ENCODE measurements at regions of chr1 and their contacts with region 1.

Region 1: DNA sequence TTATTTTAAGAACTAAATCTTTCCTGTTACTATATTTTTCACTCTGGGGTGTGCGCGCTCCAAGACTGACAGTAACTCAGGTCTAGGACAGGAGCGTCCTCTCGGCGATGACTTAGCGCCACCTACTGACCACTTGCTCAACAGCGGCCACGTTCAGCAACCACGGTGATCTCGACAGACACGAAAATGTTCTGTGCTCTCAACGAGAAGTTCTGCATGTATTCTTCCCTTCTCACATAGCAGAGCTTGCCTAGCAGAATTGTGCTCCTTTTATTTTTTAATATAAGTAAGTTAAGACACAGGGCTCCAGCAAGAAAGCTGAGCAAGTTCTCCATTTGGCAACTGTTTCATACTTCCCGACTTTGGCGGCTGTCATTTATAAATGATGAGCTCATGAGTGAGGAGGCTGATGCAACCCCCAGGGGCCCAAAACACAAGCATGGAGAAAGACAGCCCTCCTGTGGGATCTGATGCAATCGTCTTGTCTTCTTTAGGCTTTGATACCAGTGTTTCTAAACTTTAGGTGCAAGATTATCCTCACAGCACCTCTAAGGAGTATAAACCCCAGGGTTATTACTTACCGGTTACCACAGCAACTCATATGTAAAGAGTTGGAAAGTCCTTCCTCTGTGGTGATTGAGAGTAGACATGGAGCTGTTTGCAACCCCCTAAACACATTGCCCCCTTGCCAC is 92.6 kb downstream of the HHIPL2 start:
- H3K4me3 ChIP-seq: peak overlapping the region; percentile 25
- H3K27ac ChIP-seq: no peak overlapping the region; the same call in 1 of the 2 replicates
- H3K4me1 ChIP-seq: no peaks in the 10 kb centered on the region
- CTCF ChIP-seq: peak; percentile 94

Region 2: DNA sequence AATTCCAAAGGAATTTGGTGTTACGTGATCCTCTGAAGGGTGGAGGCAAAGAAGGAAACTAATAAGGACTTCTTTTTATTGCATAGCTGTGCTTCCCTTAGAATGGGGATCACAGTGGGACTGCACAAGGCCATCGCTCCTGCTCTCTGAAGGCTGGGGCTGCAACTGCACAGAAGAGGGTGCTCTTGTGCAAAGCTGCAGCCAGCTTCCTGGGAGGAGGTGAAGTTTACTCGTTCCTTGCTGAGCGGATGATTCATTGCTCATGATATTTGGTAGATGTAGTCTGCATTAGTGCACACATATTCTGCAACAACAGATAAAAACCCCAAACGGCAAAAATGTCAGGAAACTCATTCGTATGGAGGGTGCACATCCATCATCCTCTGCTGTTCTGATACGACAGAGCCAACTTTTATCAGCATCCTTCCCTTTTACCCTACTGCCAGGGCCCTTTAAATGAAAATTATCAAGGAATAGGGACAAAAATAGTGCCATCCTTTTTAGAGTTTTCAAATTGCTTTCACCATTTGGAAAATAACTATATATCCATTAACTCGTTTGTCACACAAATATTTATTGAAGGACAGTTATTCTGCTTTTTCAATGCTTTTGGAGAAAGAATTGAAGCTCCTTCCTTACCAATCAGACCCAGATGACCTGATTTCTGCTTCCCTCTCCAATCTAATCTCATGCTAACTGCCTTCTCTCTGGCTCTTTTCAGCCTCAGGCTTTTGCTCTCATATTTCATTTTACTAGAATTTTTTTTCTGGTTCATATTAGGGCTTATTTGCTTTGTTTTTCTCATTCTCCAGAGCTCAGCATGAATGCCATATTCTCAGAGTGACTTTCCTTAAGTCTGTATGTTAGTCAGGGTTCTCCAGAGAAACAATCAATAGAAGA is 977.0 kb before region 1 on chr1:
- CTCF ChIA-PET with region 1: interaction called, 29 read pairs
- POLR2A ChIA-PET with region 1: no interaction called
- H3K4me3 ChIP-seq: no peak overlapping the region
- H3K27ac ChIP-seq: no peak overlapping the region
- H3K4me1 ChIP-seq: peaks cover 2% of the 10 kb centered on the region; the same call in 1 of the 2 replicates
- CTCF ChIP-seq: peak; percentile 75

Region 3: GRCh38 chr1:222095606-222096475 is 359.5 kb before region 1 on chr1:
- CTCF ChIA-PET with region 1: interaction called, 17 read pairs
- POLR2A ChIA-PET with region 1: no interaction called
- H3K4me3 ChIP-seq: no peak overlapping the region
- H3K27ac ChIP-seq: no peak overlapping the region
- H3K4me1 ChIP-seq: no peaks in the 10 kb centered on the region
- CTCF ChIP-seq: 0 out of 2 replicates have a peak, but pooled peaks have one; percentile 25

Region 4: DNA sequence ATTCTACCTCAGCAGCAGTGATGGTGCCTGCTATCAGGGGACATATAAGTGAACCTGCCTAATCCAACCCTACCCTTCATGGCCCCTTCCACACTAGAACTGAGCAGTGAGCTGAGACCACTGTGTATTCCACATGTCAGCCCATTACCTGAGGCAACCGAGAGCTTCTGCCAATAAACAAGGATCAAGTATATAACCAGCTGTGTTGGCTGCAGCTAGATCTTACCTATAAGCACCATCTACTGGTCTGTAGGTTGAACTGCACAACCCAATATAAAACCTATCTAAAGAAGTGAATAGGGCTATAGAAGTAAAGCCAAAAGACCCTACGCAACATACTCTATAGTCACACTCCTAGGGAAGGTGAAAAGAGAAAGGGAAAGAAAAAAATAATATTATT is 284.3 kb before region 1 on chr1:
- CTCF ChIA-PET with region 1: interaction called, 15 read pairs
- POLR2A ChIA-PET with region 1: no interaction called
- H3K4me3 ChIP-seq: no peak overlapping the region
- H3K27ac ChIP-seq: no peak overlapping the region
- H3K4me1 ChIP-seq: no peaks in the 10 kb centered on the region
- CTCF ChIP-seq: 0 out of 2 replicates have a peak, but pooled peaks have one; percentile 24

Region 5: GRCh38 chr1:222465211-222466041 is 10.1 kb after region 1 on chr1:
- CTCF ChIA-PET with region 1: interaction called, 25 read pairs
- POLR2A ChIA-PET with region 1: no interaction called
- H3K4me3 ChIP-seq: peak overlapping the region; percentile 68
- H3K27ac ChIP-seq: peak overlapping the region; percentile 43; the same call in 1 of the 2 replicates
- H3K4me1 ChIP-seq: no peaks in the 10 kb centered on the region
- CTCF ChIP-seq: peak; percentile 93

Measured in HEK293 (cell line).